ENCODE measurements at regions of chr12 and their contacts with region 1.

Region 1: GRCh38 chr12:54603173-54603814 is 14.8 kb upstream of the PPP1R1A start:
- DNase-seq: peak in 1 of 2 experiments; percentile 72
- H3K4me3 ChIP-seq: no peak overlapping the region
- H3K27ac ChIP-seq: no peak overlapping the region
- H3K4me1 ChIP-seq: no peaks in the 10 kb centered on the region
- H3K27me3 ChIP-seq: peaks cover 0 to 8% (median 2%) of the 10 kb centered on the region in 4 experiments; a peak in 3 of 7 replicates
- CTCF ChIP-seq: peak; percentile 73 to 86 (median 82)
- EP300 ChIP-seq: no peak
- POLR2A ChIP-seq: no peak
- RAD21 ChIP-seq: peak; percentile 64 to 76

Region 2: DNA sequence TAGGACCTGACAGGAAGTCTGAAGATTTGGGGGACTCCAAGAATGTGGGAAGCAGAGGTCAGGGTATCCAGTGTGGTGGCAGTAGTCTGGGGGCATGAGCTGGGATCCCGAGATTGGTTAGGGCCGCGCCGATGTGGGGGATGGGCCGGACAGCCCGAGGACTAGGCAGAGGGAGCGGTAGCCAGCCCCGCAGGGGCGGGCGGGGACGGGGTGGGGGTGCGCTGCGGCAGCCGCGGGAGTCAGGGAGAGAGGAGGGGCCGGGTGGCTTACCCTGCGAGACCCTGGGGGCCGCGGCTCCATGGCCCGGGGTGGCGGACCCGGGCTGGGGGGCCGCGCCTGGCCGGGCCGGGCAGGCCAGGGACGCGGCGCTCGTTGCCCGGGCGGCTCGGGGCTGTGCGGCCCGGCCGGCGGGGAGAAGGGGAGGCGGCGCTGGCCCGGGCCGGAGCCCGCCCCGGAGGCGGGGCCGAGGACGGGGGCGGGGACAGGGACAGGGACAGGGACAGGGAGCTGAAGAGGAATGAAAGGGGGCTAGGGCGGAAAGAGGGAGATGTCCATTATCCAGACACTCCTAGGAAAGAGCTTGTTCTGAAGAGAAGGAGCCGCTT is 224.4 kb before region 1 on chr12:
- CTCF ChIA-PET with region 1: no interaction called
- POLR2A ChIA-PET with region 1: no interaction called
- DNase-seq: peak in 1 of 2 experiments; percentile 89
- H3K4me3 ChIP-seq: peak overlapping the region; percentile 30 to 54 (median 38)
- H3K27ac ChIP-seq: no peak overlapping the region
- H3K4me1 ChIP-seq: peaks cover 0 to 11% (median 7%) of the 10 kb centered on the region in 4 experiments; a peak in 5 of 7 replicates
- H3K27me3 ChIP-seq: peaks cover 0 to 3% (median 1%) of the 10 kb centered on the region in 4 experiments; a peak in 2 of 7 replicates
- CTCF ChIP-seq: no peak
- EP300 ChIP-seq: no peak
- POLR2A ChIP-seq: no peak
- RAD21 ChIP-seq: no peak

Region 3: DNA sequence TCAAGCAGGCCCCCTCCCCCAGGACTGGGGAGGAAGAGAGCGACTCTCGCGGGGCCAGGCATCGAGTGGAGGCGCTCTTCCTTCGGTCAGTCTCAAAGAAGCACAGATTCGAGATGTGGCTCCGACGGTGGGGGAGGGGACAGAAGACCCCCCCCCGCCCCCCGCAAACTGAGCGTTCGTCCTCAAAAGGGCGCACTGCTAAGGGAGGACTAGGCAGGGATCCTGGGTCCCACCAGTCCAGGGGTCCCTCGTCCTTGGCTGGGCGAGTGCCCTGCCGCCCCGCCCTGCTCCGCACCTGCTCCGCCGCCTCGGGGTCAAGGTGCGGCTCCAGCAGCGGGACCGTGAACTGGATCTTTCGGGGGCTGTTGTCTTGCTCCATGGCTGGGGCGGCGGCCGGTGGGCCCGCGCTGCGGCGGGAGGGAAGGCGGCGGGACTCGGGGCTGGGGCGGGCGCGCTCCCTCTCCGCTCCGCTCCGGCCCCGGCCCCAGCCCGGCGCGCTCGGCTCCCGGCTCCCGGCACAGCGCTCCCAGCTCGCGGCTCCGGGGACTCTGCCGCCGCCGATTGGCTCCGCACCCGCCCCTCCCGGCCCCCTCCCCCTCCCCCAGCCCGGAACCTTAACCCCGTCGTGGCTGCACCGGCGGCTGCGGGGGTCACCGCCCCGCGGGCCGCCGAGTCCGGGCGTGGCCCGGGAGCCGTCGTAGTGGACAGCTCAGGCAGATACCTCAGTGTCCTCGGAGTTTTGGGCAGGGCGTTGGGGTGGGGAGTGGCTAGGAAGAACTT is 15.0 kb before region 1 on chr12 and contains the start of gene PPP1R1A:
- CTCF ChIA-PET with region 1: interaction called, 48 read pairs
- POLR2A ChIA-PET with region 1: no interaction called
- DNase-seq: peak in 1 of 2 experiments; percentile 73
- H3K4me3 ChIP-seq: peak within 1 kb of the TSS; percentile 69 to 88 (median 74)
- H3K27ac ChIP-seq: no peak within 1 kb of the TSS
- H3K4me1 ChIP-seq: peaks cover 0 to 26% (median 18%) of the 10 kb centered on the region in 4 experiments; a peak in 6 of 7 replicates
- H3K27me3 ChIP-seq: peaks cover 2 to 53% (median 41%) of the 10 kb centered on the region in 4 experiments
- CTCF ChIP-seq: no peak
- EP300 ChIP-seq: no peak
- POLR2A ChIP-seq: no peak
- RAD21 ChIP-seq: no peak
- total RNA-seq, gene PPP1R1A: 8.1 and 13.1 TPM in 2 replicates

Region 4: DNA sequence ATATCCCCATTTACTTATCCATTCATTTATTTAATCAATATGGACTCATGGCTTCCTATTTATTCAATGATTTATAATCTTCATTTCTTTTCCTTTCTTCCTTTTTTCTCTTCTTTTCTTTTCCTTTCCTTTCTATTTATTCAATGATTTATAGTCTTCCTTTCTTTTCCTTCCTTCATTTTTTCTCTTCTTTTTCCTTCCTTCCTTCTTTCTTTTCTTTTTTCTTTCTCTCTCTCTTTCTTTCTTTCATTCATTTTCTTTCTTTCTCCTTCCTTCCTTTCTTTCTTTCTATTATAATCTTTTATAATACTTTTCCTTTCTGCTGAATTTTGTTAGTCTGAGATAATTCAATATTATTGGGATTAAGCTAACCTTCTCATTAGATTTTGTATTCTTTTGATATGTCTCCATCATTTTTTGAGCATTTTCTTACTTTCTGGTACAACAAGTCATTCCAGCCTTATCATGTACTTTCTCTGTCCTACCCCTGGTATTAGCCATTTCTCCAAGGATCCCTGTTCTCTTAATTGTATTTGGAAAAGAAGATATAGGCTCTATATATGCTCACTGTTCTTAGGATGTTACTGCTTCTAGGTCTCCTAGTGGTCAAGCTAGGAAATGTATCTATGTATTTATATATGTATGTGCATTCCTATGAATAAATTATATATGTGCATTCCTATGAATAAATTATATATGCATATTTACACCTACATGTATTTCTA is 19.3 kb after region 1 on chr12:
- CTCF ChIA-PET with region 1: interaction called, 11 read pairs
- POLR2A ChIA-PET with region 1: no interaction called
- DNase-seq: no peak
- H3K4me3 ChIP-seq: no peak overlapping the region
- H3K27ac ChIP-seq: no peak overlapping the region
- H3K4me1 ChIP-seq: no peaks in the 10 kb centered on the region
- H3K27me3 ChIP-seq: peaks cover 0 to 1% (median 0%) of the 10 kb centered on the region in 4 experiments; a peak in 2 of 7 replicates
- CTCF ChIP-seq: peak in 1 of 3 experiments; percentile 6; a peak in 1 of 4 replicates
- EP300 ChIP-seq: no peak
- POLR2A ChIP-seq: no peak
- RAD21 ChIP-seq: no peak

Region 5: DNA sequence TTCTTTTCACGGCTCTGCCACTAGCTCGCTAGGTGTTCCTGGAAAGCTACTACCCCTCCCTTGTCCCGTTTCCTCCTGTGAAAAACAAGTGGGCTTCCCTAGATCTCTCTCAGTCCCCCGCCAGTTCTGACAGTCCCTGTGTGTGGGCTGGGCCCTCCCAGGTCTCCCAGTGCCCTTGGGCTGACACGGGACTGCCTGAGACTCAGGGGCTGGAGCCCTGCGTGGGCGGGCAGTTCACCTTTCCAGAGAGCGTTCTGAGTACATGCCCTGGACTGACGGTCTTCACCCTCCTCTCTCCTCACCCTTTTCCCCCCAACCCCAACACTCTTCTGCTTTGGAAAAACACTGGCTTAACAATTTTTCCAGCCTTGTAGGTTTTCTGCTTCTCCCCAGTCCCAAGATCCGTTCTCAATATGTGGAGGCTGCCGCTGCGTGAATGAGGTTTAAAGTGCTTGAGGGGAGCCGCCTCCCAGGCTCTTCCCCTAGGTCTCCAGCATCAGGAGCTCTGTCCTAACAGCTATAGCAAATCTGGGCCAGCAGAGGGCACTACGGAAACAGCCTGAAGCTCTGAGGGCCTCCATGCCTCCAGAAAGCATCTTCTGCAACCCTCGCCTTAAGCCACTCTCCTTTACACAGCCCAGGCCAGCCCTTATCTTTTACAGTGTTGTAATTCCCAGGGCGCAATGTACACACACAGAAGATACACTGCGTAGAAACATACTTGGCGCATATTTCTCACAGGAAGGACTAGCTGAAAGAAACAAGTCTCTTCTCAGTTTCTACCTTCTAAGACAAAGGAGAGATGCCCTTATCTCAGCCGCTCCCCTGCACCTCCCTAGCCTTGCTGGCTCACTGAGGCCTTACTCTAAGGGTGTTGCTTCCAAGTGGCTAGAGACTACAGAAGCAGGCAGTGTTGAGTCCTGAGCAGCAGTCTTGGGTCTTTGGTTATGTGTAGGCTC is 55.3 kb after region 1 on chr12:
- CTCF ChIA-PET with region 1: interaction called, 18 read pairs
- POLR2A ChIA-PET with region 1: no interaction called
- DNase-seq: peak; percentile 53 to 87
- H3K4me3 ChIP-seq: peak overlapping the region in 1 of 4 experiments; percentile 7; a peak in 1 of 8 replicates
- H3K27ac ChIP-seq: no peak overlapping the region
- H3K4me1 ChIP-seq: peaks cover 0 to 6% (median 1%) of the 10 kb centered on the region in 4 experiments; a peak in 5 of 7 replicates
- H3K27me3 ChIP-seq: peaks cover 0 to 2% (median 0%) of the 10 kb centered on the region in 4 experiments; a peak in 3 of 7 replicates
- CTCF ChIP-seq: peak; percentile 76 to 95 (median 88)
- EP300 ChIP-seq: no peak
- POLR2A ChIP-seq: no peak
- RAD21 ChIP-seq: peak; percentile 76 to 84